Activated B cell treated with CpG ODN at 0.5 μM for 24 hours (primary cell): ENCODE measurements at regions of chr2 and their contacts with region 1.

Region 1: DNA sequence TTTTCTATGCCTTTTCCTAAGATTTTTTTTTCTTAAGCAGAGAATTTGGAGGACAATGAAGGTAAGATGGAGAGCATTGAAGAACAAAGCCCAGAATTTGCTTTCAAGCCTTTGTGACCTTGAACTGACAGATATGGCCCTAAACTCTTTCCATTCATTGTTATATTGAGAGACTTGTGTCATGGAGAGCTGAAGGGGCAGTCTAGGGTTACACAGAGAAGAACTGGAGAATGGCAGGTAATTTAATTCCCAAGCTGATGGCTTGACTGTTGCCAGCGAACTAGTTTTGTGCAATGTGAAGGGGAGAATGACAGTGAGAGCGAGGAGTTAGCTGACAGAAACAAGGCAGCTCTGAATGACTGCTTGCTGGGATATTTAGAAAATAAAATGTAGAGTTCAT is 1344.2 kb downstream of the LRP1B start:
- DNase-seq: no peak
- ATAC-seq: no peak
- H3K4me3 Mint-ChIP-seq: no peak overlapping the region
- H3K27ac Mint-ChIP-seq: no peak overlapping the region
- H3K4me1 Mint-ChIP-seq: no peaks in the 10 kb centered on the region
- H3K27me3 Mint-ChIP-seq: no peaks in the 10 kb centered on the region
- CTCF ChIP-seq: no peak

Region 2: DNA sequence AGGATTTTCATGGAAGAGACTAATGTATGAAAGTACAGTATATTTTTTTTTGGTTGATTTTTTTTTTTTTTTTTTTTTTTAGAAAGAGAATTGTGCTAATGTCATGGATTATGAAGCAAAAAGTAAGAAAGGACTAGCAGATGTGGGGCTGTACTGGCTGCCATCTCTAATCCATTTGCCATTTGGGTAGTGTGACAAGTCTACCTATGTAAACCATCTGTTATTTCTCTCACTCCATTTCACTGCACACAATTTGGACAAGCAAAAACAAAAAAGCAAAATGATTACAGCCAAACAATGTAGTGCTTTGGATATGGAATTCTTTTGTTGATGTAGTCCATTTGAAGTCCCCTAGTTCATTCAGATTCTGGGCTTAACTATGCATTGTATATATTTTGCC is 11.2 kb before region 1 on chr2:
- CTCF ChIA-PET with region 1: no interaction called
- POLR2A ChIA-PET with region 1: interaction called, 8 read pairs
- intact Hi-C with region 1: loop called (anchors 1 kb)
- DNase-seq: no peak
- ATAC-seq: no peak
- H3K4me3 Mint-ChIP-seq: no peak overlapping the region
- H3K27ac Mint-ChIP-seq: no peak overlapping the region
- H3K4me1 Mint-ChIP-seq: no peaks in the 10 kb centered on the region
- H3K27me3 Mint-ChIP-seq: no peaks in the 10 kb centered on the region
- CTCF ChIP-seq: no peak

Region 3: GRCh38 chr2:141079231-141079630 is 292.6 kb after region 1 on chr2:
- CTCF ChIA-PET with region 1: no interaction called
- POLR2A ChIA-PET with region 1: no interaction called
- intact Hi-C with region 1: no loop called
- DNase-seq: no peak
- ATAC-seq: no peak
- H3K4me3 Mint-ChIP-seq: no peak overlapping the region
- H3K27ac Mint-ChIP-seq: no peak overlapping the region
- H3K4me1 Mint-ChIP-seq: no peaks in the 10 kb centered on the region
- H3K27me3 Mint-ChIP-seq: no peaks in the 10 kb centered on the region
- CTCF ChIP-seq: no peak